ENCODE measurements at regions of chr5 and their contacts with region 1.

Region 1: DNA sequence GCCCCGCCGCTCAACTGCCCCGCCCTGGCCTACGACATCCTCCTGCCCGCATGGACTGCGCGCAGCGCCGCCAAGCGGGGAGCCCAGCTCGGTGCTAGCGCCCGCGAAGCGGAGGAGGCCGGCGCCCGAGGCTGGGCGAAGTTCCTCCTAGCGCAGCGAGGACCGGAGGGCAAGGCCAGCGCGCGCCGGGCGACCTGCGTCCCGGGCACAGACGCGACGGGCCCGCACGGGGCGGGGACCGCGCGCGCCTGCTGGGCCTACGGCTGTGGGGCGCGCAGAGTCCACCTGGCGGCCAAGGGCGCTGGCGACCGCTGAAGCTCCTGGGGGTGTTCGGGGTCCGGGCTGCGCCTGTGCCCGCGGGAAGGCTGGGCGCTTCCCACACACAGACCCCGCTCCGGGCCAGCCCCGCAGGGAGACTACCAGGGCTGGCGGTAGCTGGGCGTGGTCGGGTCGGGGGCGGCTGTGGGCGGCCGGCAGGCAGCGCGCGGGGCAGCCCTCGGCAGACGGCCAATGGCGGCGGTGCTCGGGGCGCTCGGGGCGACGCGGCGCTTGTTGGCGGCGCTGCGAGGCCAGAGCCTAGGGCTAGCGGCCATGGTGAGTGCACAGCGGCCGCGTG is at the start of gene PCBD2:
- DNase-seq: peak; percentile 83
- ATAC-seq: peak; percentile 93
- H3K4me3 ChIP-seq: peak within 1 kb of the TSS; percentile 80
- H3K27ac ChIP-seq: peak within 1 kb of the TSS; percentile 91
- H3K4me1 ChIP-seq: no peaks in the 10 kb centered on the region
- H3K27me3 ChIP-seq: no peaks in the 10 kb centered on the region
- CTCF ChIP-seq: peak; percentile 92
- POLR2A ChIP-seq: peak; percentile 34; the same call in 1 of the 2 replicates
- RAD21 ChIP-seq: peak; percentile 68
- total RNA-seq, gene PCBD2: 2.2 and 2.8 TPM in 2 replicates

Region 2: GRCh38 chr5:134738133-134738962 is 166.4 kb before region 1 on chr5 and contains the start of gene CAMLG:
- CTCF ChIA-PET with region 1: interaction called, 5 read pairs
- POLR2A ChIA-PET with region 1: no interaction called
- dilution Hi-C with region 1: no loop called
- in situ Hi-C with region 1: no loop called
- intact Hi-C with region 1: loop called (anchors 1 kb)
- DNase-seq: peak; percentile 97
- ATAC-seq: peak; percentile 97
- H3K4me3 ChIP-seq: peak within 1 kb of the TSS; percentile 96
- H3K27ac ChIP-seq: peak within 1 kb of the TSS; percentile 75
- H3K4me1 ChIP-seq: peaks cover 3% of the 10 kb centered on the region; the same call in 1 of the 2 replicates
- H3K27me3 ChIP-seq: no peaks in the 10 kb centered on the region
- CTCF ChIP-seq: peak; percentile 64
- POLR2A ChIP-seq: peak; percentile 90
- RAD21 ChIP-seq: peak; percentile 42
- total RNA-seq, gene CAMLG: 13.1 and 24.7 TPM in 2 replicates

Region 3: DNA sequence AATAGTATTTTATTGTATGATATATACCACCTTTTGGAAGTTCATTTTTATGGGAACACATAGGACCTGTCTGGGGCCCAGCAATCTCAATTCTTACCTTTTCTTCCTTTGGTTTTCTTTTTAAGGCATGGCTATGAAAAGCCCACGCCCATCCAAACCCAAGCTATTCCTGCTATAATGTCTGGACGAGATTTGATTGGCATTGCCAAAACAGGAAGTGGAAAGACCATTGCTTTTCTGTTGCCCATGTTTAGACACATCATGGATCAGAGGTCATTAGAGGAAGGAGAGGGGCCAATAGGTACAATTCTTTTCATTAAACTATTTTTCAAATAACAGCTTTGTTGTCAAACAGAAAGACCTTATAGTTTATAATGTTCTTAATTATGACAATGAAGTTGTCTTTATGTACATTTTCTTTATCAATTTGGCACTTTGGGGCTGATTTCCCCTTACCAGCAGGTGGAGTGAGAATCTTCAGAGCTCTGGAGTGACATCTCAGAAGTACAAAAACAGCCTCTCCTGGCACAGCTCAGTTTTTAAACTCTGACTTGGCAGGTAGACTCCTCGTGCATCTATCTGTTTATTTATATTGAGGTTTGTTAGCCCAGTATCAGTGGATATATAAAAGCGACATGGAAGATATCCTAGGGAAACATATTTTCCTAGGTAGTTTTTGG is 120.4 kb before region 1 on chr5:
- CTCF ChIA-PET with region 1: no interaction called
- POLR2A ChIA-PET with region 1: no interaction called
- dilution Hi-C with region 1: no loop called
- in situ Hi-C with region 1: no loop called
- intact Hi-C with region 1: loop called (anchors 1 kb)
- DNase-seq: peak; percentile 33
- ATAC-seq: no peak; the same call in none of the 2 replicates
- H3K4me3 ChIP-seq: no peak overlapping the region
- H3K27ac ChIP-seq: no peak overlapping the region
- H3K4me1 ChIP-seq: peaks cover 8% of the 10 kb centered on the region
- H3K27me3 ChIP-seq: no peaks in the 10 kb centered on the region
- CTCF ChIP-seq: peak; percentile 39
- POLR2A ChIP-seq: no peak
- RAD21 ChIP-seq: 0 out of 2 replicates have a peak, but pooled peaks have one; percentile 25

Region 4: GRCh38 chr5:134873987-134874830 is 30.5 kb before region 1 on chr5 and contains the start of gene TXNDC15:
- CTCF ChIA-PET with region 1: no interaction called
- POLR2A ChIA-PET with region 1: no interaction called
- dilution Hi-C with region 1: no loop called
- in situ Hi-C with region 1: no loop called
- intact Hi-C with region 1: loop called (anchors 2 kb)
- DNase-seq: peak; percentile 86
- ATAC-seq: peak; percentile 88
- H3K4me3 ChIP-seq: peak within 1 kb of the TSS; percentile 81
- H3K27ac ChIP-seq: peak within 1 kb of the TSS; percentile 99
- H3K4me1 ChIP-seq: peaks cover 5% of the 10 kb centered on the region; the same call in 1 of the 2 replicates
- H3K27me3 ChIP-seq: no peaks in the 10 kb centered on the region
- CTCF ChIP-seq: no peak
- POLR2A ChIP-seq: peak; percentile 76
- RAD21 ChIP-seq: no peak
- total RNA-seq, gene TXNDC15: 101 and 125 TPM in 2 replicates

Region 5: GRCh38 chr5:135191084-135191826 is 286.5 kb after region 1 on chr5:
- CTCF ChIA-PET with region 1: interaction called, 3 read pairs
- POLR2A ChIA-PET with region 1: no interaction called
- dilution Hi-C with region 1: no loop called
- in situ Hi-C with region 1: no loop called
- intact Hi-C with region 1: loop called (anchors 5 kb)
- DNase-seq: peak; percentile 68
- ATAC-seq: peak; percentile 77
- H3K4me3 ChIP-seq: no peak overlapping the region
- H3K27ac ChIP-seq: no peak overlapping the region
- H3K4me1 ChIP-seq: peaks cover 19% of the 10 kb centered on the region
- H3K27me3 ChIP-seq: no peaks in the 10 kb centered on the region
- CTCF ChIP-seq: peak; percentile 89
- POLR2A ChIP-seq: no peak
- RAD21 ChIP-seq: peak; percentile 90

Measured in IMR-90 (cell line).